Heart left ventricle (tissue), 16 donors: ENCODE measurements at regions of chr9 and their contacts with region 1.

Region 1: GRCh38 chr9:100028201-100028784 is 70.5 kb downstream of the ERP44 start:
- DNase-seq: peak; percentile 61 to 69 (median 65)
- ATAC-seq: peak; percentile 42 to 97 (median 94)
- H3K4me3 ChIP-seq: no peak overlapping the region
- H3K27ac ChIP-seq: no peak overlapping the region
- H3K4me1 ChIP-seq: peaks cover 0 to 11% (median 0%) of the 10 kb centered on the region in 12 donors
- H3K27me3 ChIP-seq: no peaks in the 10 kb centered on the region
- CTCF ChIP-seq: peak; percentile 89 to 96 (median 94)
- POLR2A ChIP-seq: no peak

Region 2: DNA sequence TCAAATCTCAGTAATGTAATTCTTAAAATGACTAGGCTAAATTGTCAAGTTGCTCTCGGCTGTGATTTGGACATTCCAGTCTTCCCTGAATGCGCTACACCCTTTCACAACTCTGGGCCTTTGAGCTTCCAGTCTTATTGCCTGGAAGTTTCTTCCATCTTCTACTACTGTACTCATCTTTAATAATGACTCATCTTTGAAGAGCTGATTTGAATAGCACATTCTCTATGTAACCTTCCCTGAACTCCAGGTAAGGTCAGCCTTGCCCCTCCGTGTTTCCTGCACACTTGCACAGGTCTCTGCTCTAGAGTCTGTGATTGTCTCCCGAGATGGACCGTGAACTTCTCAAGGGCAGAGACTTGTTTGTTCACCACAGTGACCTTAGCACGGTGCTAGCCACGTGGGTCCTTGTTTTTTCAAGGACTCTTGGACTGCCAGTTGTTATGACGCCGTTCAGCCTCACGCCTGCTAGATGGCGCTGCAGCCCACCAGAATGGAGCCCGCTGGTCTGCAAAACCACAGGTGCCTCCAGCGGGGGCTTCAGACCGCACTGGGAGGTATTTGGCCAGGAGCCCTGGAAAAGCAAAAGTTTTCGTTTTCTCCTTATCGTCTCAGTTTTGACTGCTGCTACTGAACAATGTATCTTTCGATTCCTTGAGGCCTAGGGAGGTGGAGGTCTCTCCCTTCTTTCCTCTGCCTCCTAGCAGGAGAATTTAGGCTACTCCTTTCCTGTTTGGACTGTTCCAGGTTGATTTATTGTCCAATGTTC is 761.9 kb before region 1 on chr9:
- intact Hi-C with region 1: loop called in 1 of 10 experiments (anchors 10 kb)
- DNase-seq: peak; percentile 63 to 79 (median 66)
- ATAC-seq: peak; percentile 55 to 88 (median 82)
- H3K4me3 ChIP-seq: no peak overlapping the region
- H3K27ac ChIP-seq: no peak overlapping the region
- H3K4me1 ChIP-seq: peaks cover 0 to 10% (median 2%) of the 10 kb centered on the region in 12 donors
- H3K27me3 ChIP-seq: no peaks in the 10 kb centered on the region
- CTCF ChIP-seq: peak; percentile 65 to 90 (median 78)
- POLR2A ChIP-seq: no peak

Region 3: DNA sequence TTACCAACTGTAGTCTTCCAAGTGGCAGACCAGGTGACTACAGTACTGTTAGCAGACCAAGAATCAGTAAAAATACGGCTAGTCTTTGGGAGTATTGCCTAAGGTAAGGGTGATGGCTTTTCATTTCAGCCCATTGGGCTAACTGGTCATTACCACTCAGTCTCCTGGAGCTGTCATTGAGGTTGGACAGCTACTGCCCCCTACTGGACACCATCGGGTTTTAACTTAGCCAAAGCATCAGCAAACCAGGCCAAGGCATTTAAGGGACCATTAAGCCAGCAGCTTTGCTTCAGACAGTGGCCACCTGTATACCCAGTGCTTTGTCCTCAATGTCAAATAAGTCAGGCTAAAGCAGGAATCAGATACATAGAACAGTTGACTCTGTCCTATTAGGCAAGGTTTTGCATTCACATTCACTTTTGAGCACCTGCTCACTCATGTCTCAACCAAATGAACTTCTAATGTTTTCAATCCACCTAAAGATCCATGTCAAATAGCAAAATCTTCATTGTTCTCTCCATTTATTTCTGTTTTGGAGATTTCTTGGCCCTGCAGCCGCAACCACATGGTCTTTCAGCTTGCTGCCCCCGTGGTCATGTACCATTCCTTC is 188.0 kb after region 1 on chr9:
- intact Hi-C with region 1: loop called in 9 of 10 experiments (anchors 1 to 5 kb)
- DNase-seq: peak in 4 of 5 donors; percentile 27 to 50 (median 36)
- ATAC-seq: peak in 3 of 4 donors; percentile 55 to 62 (median 61)
- H3K4me3 ChIP-seq: no peak overlapping the region
- H3K27ac ChIP-seq: no peak overlapping the region
- H3K4me1 ChIP-seq: peaks cover 0 to 7% (median 0%) of the 10 kb centered on the region in 12 donors
- H3K27me3 ChIP-seq: no peaks in the 10 kb centered on the region
- CTCF ChIP-seq: peak; percentile 42 to 70 (median 63)
- POLR2A ChIP-seq: no peak

Region 4: GRCh38 chr9:100317706-100318105 is 289.4 kb after region 1 on chr9:
- intact Hi-C with region 1: loop called in 8 of 10 experiments (anchors 2 to 10 kb)
- DNase-seq: no peak
- ATAC-seq: no peak
- H3K4me3 ChIP-seq: no peak overlapping the region
- H3K27ac ChIP-seq: no peak overlapping the region
- H3K4me1 ChIP-seq: peaks cover 0 to 2% (median 0%) of the 10 kb centered on the region in 12 donors
- H3K27me3 ChIP-seq: no peaks in the 10 kb centered on the region
- CTCF ChIP-seq: no peak
- POLR2A ChIP-seq: no peak

Region 5: DNA sequence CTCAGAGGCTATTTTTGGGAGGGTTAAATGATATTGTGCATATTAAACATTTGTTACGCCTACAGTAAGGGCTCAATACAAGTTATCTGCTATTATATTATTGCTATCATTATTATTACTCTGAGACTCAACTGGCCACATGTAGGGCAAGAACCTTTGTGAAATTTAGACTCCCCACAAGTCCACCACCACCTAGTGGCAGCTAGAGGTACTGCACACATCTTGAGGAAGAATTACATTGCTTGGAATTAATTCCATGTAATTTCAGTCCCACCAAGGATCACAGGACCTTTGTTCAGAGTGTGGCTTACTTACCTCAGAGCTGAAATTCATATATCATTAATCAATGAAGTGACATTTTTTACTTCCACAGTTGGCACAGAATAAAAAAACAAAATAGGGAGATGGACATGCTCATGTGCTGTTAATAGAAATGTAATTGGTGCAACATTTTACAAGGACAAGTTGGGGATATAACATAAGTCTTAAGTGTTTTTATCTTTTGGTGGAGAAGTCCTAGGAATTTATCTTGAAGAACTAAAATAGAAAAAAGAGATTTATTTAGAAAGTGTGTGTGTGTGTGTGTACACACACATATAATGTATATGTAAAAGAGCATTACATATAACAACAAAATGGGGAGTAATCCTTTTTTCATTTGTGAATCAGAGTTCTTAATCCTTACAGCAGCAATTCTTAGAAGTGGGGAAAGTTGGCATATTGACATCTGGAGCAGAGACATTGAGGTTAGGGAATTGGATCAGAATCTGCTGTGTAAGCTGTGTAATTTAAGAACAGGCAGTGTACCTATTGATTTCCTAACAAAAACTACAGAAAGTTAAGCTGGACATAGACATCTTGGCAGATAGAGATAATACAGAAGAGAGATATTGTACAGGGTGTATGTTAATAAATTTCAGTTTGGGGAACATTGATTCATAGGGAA is 409.8 kb after region 1 on chr9:
- intact Hi-C with region 1: loop called in 1 of 10 experiments (anchors 5 kb)
- DNase-seq: peak in 4 of 5 donors; percentile 50 to 72 (median 58)
- ATAC-seq: peak in 3 of 4 donors; percentile 41 to 59 (median 56)
- H3K4me3 ChIP-seq: no peak overlapping the region
- H3K27ac ChIP-seq: no peak overlapping the region
- H3K4me1 ChIP-seq: no peaks in the 10 kb centered on the region
- H3K27me3 ChIP-seq: no peaks in the 10 kb centered on the region
- CTCF ChIP-seq: peak; percentile 89 to 100 (median 94)
- POLR2A ChIP-seq: no peak